Cardiac septum (tissue), 1 donor: ENCODE measurements at regions of chr2 and their contacts with region 1.

Region 1: GRCh38 chr2:218301176-218301819 is 9.0 kb upstream of the TMBIM1 start:
- DNase-seq: peak; percentile 87

Region 2: DNA sequence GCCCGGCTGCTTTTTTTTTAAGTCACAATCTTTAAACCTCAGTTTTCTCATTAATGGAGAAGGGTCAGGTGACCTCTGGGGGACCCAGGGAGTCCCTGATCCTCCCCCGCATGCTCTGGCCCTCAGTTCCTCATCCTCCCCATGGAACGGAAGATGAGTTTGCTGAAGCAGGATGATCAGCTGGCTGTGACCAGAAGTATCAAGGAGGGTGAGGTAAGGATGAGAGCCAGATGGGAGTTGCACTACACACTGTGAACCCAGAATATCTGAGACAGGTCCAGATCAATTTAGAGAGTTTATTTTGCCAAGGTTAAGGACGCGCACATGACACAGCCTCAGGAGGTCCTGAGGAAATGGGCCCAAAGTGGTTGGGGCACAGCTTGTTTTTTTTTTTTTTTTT is 59.1 kb after region 1 on chr2:
- intact Hi-C with region 1: loop called (anchors 1 kb)
- DNase-seq: no peak

Region 3: DNA sequence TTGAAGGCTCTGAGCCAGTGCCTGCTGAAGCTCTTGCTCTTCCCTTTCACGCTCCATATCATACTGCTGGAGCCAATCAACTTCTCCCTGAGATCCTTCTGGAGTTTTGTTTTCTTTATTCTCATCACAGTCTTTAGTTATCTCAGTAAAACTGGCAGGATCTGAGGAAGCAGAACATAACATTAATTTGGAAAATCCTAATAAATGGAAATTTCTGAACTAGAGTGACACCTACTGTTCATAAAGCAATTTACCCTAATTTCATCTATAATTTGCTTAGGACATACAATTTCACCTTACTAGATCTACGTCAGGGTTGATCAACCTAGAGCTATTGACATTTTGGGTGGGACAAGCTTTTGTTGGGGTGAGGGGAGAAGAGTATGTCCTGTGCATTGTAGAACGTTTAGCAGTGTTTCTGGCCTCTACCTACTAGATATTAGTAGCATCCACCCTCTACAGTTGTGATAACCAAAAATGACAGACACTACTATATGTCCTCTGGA is 164.8 kb after region 1 on chr2:
- intact Hi-C with region 1: loop called (anchors 1 kb)
- DNase-seq: no peak